ENCODE measurements at regions of chr11 and their contacts with region 1.

Region 1: DNA sequence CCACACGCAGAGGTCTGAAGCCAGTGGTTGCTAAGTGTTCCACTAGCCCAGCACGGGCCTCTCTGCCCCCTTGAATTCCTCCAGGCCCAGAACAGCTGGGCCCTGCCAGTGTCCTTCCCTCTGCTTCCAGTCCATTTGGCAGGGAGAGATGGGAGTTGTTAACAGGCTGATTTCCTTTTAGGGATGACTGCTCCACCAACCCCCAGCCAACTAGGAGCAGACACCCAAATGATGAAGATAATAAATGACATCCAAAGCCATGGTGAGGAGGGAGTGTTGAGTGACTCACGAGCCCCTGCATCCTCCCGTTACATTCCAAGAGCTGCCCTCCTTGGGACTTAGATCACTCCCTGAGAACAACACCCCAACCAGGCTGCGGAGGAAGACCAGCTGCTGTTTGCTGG is 20.6 kb downstream of the PARVA start:
- DNase-seq: peak; percentile 60 to 82 (median 75)
- ATAC-seq: peak; percentile 89 to 94 (median 93)
- H3K4me3 ChIP-seq: no peak overlapping the region
- H3K27ac ChIP-seq: peak overlapping the region; percentile 3 to 98 (median 68)
- H3K4me1 ChIP-seq: peaks cover 0 to 57% (median 29%) of the 10 kb centered on the region in 12 donors
- H3K27me3 ChIP-seq: no peaks in the 10 kb centered on the region
- CTCF ChIP-seq: no peak
- POLR2A ChIP-seq: no peak

Region 2: DNA sequence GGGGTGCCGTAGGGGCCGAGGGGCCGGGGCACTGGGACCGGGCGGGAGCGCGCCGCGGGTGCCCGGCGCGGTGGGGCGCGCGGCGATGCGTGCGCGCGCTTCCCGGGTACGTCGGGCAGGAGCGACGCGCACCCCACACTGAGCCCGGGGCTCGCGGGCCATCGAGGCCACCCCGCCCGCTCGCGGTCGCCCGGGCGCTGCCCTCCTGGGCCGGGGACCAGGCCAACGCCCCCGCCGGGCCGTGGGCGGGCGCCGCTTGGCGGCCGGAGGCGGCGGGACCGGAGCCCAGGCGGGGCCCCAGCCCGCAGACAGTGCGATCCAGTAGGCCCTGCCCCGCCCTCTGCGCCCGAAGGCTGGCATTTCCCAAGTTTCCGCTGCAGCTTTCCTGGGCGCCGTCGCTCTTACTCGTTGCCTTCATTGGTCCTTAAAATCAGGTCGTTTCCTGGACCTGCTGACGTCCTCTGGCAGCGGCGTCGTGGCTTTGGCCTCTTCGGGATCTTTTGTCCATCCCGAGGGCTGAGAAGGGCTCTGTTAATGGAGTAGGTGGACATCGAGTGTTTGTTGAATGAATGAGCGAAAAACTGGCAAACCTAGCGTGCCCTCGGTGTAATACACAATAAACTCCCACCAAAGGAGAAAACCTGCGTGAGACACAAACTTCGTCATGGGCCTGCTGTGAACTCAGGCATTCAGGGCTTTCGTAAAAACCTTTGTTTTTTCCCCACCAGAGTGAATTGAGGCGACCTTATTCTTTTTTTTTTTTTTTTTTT is 19.9 kb before region 1 on chr11:
- intact Hi-C with region 1: loop called in 1 of 10 experiments (anchors 2 kb)
- DNase-seq: peak; percentile 65 to 85 (median 77)
- ATAC-seq: peak; percentile 21 to 82 (median 66)
- H3K4me3 ChIP-seq: peak overlapping the region; percentile 59 to 98 (median 72)
- H3K27ac ChIP-seq: peak overlapping the region; percentile 93 to 99 (median 97)
- H3K4me1 ChIP-seq: peaks cover 1 to 68% (median 37%) of the 10 kb centered on the region in 12 donors
- H3K27me3 ChIP-seq: peaks cover 0 to 11% (median 0%) of the 10 kb centered on the region in 9 donors
- CTCF ChIP-seq: peak in 8 of 12 donors; percentile 14 to 51 (median 28)
- POLR2A ChIP-seq: no peak

Region 3: DNA sequence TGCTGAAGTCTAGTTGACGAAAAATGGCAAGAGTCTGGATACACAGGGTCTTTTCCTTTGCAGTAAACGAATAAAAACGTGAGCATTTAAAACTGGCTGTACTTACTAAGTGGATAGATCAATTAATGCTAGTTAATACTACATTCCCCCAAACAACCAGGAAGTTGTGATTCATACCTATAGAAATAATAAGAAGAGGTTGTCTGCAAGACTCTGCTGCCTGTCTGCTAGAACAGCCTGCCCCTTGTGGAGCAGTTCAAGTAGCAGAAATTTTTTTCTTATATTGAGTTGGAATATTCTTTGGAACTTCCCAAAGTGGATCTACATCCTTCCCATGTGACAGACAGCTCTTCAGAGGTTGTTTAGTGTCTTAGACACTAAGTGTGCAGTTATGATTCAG is 363.1 kb after region 1 on chr11:
- intact Hi-C with region 1: no loop called
- DNase-seq: no peak
- ATAC-seq: no peak
- H3K4me3 ChIP-seq: no peak overlapping the region
- H3K27ac ChIP-seq: no peak overlapping the region
- H3K4me1 ChIP-seq: peaks cover 3 to 60% (median 28%) of the 10 kb centered on the region in 12 donors
- H3K27me3 ChIP-seq: no peaks in the 10 kb centered on the region
- CTCF ChIP-seq: peak in 4 of 12 donors; percentile 6 to 34 (median 19)
- POLR2A ChIP-seq: no peak